AG04450 (cell line): ENCODE measurements at regions of chr17 and their contacts with region 1.

Region 1: GRCh38 chr17:7572588-7573323 is 6.7 kb upstream of the CD68 start:
- DNase-seq: peak; percentile 98
- H3K4me3 ChIP-seq: peak overlapping the region; percentile 98
- H3K27ac ChIP-seq: peak overlapping the region; percentile 96
- H3K27me3 ChIP-seq: no peaks in the 10 kb centered on the region
- CTCF ChIP-seq: peak; percentile 6; the same call in 1 of the 2 replicates

Region 2: DNA sequence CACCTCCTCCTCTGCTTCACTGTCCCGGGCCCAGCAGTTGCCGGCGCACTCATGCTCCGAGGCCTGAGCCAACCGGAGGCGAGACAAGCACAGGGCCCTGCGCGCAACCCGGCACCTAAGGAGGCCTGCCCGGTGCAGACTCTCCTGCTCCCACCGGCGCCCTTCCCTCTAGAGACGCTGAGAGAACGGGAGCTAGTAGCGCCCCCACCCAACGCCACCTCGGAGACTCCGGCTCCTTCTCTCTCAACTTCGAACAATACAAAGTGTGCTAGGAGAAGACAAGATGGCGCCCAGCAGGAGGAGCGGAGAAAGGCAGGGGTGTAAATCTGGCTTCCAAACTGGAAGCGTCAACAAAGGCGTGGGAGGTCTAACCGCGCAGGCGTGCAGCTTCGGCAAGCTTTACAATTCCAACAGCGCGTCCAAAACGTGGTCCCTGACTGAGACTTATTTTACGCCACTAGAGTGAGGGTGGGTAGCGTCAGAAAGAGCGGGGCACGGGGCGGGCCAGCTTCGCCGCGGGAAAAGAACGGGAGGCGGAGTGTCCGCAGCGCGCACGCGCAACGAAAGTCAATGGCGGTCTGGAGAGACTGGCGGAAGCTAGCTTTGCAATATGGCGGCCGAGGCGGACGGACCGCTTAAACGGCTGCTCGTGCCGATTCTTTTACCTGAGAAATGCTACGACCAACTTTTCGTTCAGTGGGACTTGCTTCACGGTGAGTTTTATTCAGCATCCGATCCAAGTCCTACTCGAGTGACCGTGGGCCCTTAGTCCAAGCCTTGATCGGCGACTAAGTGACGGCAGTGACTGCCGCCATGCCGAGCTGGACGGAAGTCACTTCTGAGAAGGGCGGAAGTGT is 10.7 kb after region 1 on chr17 and contains the start of gene MPDU1:
- CTCF ChIA-PET with region 1: interaction called, 3 read pairs
- POLR2A ChIA-PET with region 1: interaction called, 44 read pairs
- DNase-seq: peak; percentile 92
- H3K4me3 ChIP-seq: peak within 1 kb of the TSS; percentile 92
- H3K27ac ChIP-seq: peak within 1 kb of the TSS; percentile 97
- H3K27me3 ChIP-seq: no peaks in the 10 kb centered on the region
- CTCF ChIP-seq: no peak; the same call in 1 of the 2 replicates
- polyA plus RNA-seq, gene MPDU1: 128 and 131 TPM in 2 replicates

Region 3: GRCh38 chr17:7729816-7730215 is 157.1 kb after region 1 on chr17:
- CTCF ChIA-PET with region 1: no interaction called
- POLR2A ChIA-PET with region 1: no interaction called
- DNase-seq: no peak
- H3K4me3 ChIP-seq: no peak overlapping the region
- H3K27ac ChIP-seq: no peak overlapping the region
- H3K27me3 ChIP-seq: peaks cover 8% of the 10 kb centered on the region
- CTCF ChIP-seq: no peak